Kidney (tissue), 22 donors: ENCODE measurements at regions of chr1 and their contacts with region 1.

Region 1: GRCh38 chr1:119662034-119662437 is 14.0 kb upstream of the ZNF697 start:
- DNase-seq: no peak
- H3K4me3 ChIP-seq: no peak overlapping the region
- H3K27ac ChIP-seq: no peak overlapping the region
- H3K4me1 ChIP-seq: peaks cover 6 to 10% (median 9%) of the 10 kb centered on the region in 3 donors
- H3K27me3 ChIP-seq: no peaks in the 10 kb centered on the region
- CTCF ChIP-seq: no peak

Region 2: DNA sequence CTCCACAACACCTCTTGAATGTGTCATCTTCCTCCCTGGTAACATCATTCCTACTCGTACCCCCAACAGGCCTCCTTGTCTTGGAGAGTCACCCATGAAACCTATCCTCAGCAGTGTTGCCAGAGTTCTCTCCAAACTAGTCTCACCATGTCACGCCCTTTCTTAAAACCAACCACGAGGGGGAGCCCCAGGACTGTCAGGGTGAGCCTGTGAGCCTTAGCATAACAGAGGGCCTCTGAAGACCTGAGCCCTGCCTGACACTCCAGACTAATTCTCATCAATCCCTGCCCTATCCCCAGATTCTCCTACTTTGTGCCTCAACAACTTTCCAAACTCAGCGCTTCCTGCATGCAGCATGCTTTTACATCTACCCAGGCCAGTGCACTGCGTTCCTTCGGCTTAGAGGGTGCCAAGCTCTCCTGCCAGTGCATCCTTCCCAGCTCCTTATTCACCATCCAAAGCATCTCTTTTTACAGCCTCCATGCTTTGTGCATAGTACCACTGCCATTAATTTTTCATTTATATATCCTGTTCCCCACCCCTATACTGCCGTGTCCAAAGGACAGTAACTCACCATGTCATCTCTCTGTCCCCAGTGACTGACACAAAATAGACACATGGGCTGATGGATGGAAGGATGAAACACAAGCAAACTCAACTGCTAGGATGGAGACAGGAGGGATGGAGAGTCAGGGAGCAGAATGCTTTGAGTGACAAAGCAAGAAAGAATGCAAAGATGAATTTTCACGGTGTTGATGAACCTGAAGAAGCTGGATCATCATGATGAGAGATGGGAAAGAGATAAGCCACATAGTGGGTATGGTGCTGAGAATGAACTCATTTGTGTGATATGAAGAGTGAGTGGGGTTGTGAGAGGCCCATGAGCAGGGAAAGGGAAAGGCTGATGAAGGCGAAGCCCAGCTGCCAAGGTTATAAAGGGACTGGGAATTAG is 48.0 kb before region 1 on chr1:
- intact Hi-C with region 1: loop called (anchors 5 kb)
- DNase-seq: peak; percentile 85 to 96 (median 91)
- H3K4me3 ChIP-seq: no peak overlapping the region
- H3K27ac ChIP-seq: no peak overlapping the region
- H3K4me1 ChIP-seq: peaks cover 0 to 17% (median 12%) of the 10 kb centered on the region in 3 donors
- H3K27me3 ChIP-seq: no peaks in the 10 kb centered on the region
- CTCF ChIP-seq: peak; percentile 85